ENCODE measurements at regions of chr3 and their contacts with region 1.

Region 1: DNA sequence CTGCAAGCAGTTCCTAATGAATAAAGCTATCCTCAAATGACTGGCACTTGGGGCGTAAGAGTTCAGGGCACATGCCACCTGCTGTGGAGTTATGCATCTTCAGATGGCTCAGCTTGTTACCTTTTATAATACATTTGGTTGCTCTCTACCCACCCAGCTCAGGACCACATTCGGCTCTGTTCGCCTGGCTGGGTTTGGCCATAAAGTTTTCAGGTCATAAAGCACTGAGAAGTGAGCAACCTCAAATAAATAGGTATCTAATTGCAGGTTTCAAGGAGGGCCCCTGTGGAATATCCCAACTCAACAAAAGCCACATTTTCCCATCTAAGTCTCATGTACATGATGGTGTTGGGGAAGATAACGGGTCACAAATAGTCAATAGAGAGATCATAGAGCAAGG is 727.3 kb downstream of the GRM7 start:
- DNase-seq: no peak
- H3K4me3 ChIP-seq: no peak overlapping the region
- H3K4me3 Mint-ChIP-seq: no peak overlapping the region
- H3K27ac Mint-ChIP-seq: no peak overlapping the region
- H3K4me1 ChIP-seq: no peaks in the 10 kb centered on the region
- H3K4me1 Mint-ChIP-seq: no peaks in the 10 kb centered on the region
- H3K27me3 ChIP-seq: no peaks in the 10 kb centered on the region
- H3K27me3 Mint-ChIP-seq: peaks cover 1% of the 10 kb centered on the region
- CTCF ChIP-seq: no peak

Region 2: GRCh38 chr3:7518456-7518855 is 69.8 kb before region 1 on chr3:
- CTCF ChIA-PET with region 1: no interaction called
- POLR2A ChIA-PET with region 1: no interaction called
- intact Hi-C with region 1: loop called (anchors 2 kb)
- DNase-seq: no peak
- H3K4me3 ChIP-seq: no peak overlapping the region
- H3K4me3 Mint-ChIP-seq: no peak overlapping the region
- H3K27ac Mint-ChIP-seq: no peak overlapping the region
- H3K4me1 ChIP-seq: no peaks in the 10 kb centered on the region
- H3K4me1 Mint-ChIP-seq: no peaks in the 10 kb centered on the region
- H3K27me3 ChIP-seq: no peaks in the 10 kb centered on the region
- H3K27me3 Mint-ChIP-seq: peaks cover under 1% of the 10 kb centered on the region
- CTCF ChIP-seq: no peak

Region 3: DNA sequence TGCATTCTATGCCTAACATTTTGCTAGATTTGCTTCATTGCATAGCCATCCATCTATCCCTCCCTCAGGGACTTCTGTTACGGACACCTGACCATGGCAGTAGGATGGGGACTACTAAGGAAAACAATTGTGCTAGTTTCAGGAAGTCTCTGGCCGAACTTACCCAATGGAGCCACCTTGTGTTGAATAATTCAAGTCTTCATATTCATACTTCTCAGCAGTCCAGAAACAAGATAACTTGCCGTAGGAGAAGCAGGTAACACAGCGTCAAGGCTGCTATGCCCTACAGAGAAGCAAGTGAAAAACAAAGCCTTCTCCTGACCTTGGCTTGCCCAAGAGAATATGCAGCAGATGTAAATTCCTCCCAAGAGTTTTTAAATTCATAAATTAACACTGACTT is 42.0 kb before region 1 on chr3:
- CTCF ChIA-PET with region 1: no interaction called
- POLR2A ChIA-PET with region 1: no interaction called
- intact Hi-C with region 1: no loop called
- DNase-seq: peak in 1 of 2 experiments; percentile 2
- H3K4me3 ChIP-seq: no peak overlapping the region
- H3K4me3 Mint-ChIP-seq: no peak overlapping the region
- H3K27ac Mint-ChIP-seq: no peak overlapping the region
- H3K4me1 ChIP-seq: no peaks in the 10 kb centered on the region
- H3K4me1 Mint-ChIP-seq: no peaks in the 10 kb centered on the region
- H3K27me3 ChIP-seq: no peaks in the 10 kb centered on the region
- H3K27me3 Mint-ChIP-seq: peaks cover 5% of the 10 kb centered on the region
- CTCF ChIP-seq: no peak

Region 4: DNA sequence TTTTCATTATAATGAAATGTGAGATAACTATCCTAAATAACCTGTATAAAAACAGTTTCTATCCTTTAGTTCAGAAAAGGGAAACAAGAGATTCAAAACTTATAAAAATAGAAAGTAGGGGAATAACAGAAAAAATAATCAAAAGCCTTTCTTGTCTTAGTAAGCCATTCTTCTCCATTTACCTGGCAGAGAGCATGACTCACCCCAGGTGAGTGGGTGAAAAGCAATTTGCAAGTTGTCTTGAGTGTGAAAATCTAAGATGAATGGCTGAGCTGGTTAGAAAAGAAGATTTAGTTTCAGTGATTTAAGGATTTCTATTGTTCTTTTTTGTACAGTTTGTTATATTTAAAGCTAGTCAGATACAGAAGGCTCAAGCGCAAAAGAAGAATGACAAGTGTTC is 25.3 kb before region 1 on chr3:
- CTCF ChIA-PET with region 1: no interaction called
- POLR2A ChIA-PET with region 1: no interaction called
- intact Hi-C with region 1: no loop called
- DNase-seq: no peak
- H3K4me3 ChIP-seq: no peak overlapping the region
- H3K4me3 Mint-ChIP-seq: no peak overlapping the region
- H3K27ac Mint-ChIP-seq: no peak overlapping the region
- H3K4me1 ChIP-seq: no peaks in the 10 kb centered on the region
- H3K4me1 Mint-ChIP-seq: no peaks in the 10 kb centered on the region
- H3K27me3 ChIP-seq: no peaks in the 10 kb centered on the region
- H3K27me3 Mint-ChIP-seq: peaks cover 11% of the 10 kb centered on the region
- CTCF ChIP-seq: no peak

Region 5: DNA sequence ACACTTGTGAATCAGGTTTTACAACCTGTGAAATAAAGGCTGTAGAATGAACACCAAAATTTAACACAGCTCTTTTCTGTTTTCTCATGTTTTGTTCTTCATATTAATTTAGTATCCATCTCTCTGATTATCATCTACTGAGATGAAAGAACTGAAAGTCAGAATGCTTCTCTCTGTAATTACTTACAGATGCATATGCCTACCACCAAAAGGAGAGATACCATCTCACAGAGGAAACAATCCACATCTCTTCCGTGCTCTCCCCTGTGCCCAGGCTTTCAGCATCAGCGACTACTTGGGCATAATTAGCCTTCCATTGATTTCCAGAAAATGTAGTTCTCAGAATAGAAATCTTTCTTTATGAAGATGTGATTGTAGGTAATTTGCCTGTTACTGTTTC is 14.1 kb after region 1 on chr3:
- CTCF ChIA-PET with region 1: no interaction called
- POLR2A ChIA-PET with region 1: no interaction called
- intact Hi-C with region 1: no loop called
- DNase-seq: no peak
- H3K4me3 ChIP-seq: no peak overlapping the region
- H3K4me3 Mint-ChIP-seq: no peak overlapping the region
- H3K27ac Mint-ChIP-seq: no peak overlapping the region
- H3K4me1 ChIP-seq: no peaks in the 10 kb centered on the region
- H3K4me1 Mint-ChIP-seq: no peaks in the 10 kb centered on the region
- H3K27me3 ChIP-seq: no peaks in the 10 kb centered on the region
- H3K27me3 Mint-ChIP-seq: no peaks in the 10 kb centered on the region
- CTCF ChIP-seq: no peak